ENCODE measurements at regions of chr16 and their contacts with region 1.

Region 1: DNA sequence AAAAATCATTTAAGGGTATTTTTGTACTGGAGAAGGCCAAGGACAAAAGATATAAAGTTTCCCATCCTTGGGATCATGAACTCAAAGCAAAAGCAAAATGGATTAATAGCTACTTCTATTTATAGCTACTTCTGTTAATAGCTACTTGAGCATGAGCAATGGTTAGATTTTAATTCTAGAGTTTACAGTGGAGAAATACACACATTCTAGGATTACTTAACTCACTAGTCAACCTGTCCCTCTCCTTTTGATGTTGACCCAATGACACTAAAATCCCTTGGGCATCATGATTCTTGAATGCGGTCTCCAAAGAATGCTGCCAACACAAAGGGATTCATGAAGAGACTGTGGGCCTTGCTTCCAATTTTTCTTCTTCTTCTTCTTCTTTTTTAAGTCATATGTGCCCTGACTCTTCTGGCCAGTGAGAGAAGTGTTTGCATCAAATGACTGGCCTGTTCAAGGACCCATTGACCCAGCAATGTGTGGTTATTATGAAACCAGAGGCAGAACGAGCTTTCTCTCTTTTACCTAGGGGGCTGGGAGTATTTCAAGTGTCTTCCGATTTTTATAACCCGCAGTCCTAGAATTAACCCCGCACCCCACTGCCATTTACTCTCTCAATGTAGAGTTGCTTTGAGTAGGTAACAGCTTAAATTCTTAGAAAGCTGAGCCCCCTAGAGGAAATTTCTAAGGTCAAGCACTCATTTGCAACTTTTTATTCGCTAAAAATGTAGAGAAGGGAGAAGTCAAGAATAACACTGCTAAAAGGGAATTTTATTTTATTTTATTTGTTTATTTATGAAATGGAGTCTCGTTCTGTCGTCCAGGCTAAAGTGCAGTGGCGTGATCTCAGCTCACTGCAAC is 34.6 kb downstream of the OTOA start:
- DNase-seq: no peak
- H3K4me3 ChIP-seq: no peak overlapping the region
- H3K27ac ChIP-seq: no peak overlapping the region
- H3K4me1 ChIP-seq: no peaks in the 10 kb centered on the region
- H3K27me3 ChIP-seq: no peaks in the 10 kb centered on the region
- CTCF ChIP-seq: no peak

Region 2: DNA sequence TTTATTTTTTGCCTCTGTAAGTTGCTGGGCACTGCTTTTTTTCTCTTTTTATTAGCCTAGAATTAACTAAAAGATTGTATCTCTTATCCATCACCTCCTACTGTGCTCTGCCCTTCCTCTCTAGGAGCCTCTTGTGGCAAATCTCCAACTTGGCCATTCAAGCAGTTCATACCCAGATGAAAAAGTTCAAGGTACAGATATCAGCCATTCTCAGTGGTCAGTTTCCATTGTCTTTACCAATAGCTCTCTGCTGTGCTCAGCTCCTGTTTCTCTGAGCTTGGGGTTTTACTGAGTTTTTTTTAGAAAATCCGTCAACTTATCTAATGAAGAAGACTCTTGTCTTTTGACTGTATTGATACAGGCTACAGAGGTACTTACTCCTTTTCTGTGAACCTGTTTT is 325.1 kb after region 1 on chr16:
- CTCF ChIA-PET with region 1: no interaction called
- POLR2A ChIA-PET with region 1: no interaction called
- intact Hi-C with region 1: no loop called
- DNase-seq: no peak
- H3K4me3 ChIP-seq: no peak overlapping the region
- H3K27ac ChIP-seq: 0 out of 2 replicates have a peak overlapping the region, but pooled peaks have one; percentile 20
- H3K4me1 ChIP-seq: peaks cover 52% of the 10 kb centered on the region
- H3K27me3 ChIP-seq: no peaks in the 10 kb centered on the region
- CTCF ChIP-seq: no peak

Region 3: DNA sequence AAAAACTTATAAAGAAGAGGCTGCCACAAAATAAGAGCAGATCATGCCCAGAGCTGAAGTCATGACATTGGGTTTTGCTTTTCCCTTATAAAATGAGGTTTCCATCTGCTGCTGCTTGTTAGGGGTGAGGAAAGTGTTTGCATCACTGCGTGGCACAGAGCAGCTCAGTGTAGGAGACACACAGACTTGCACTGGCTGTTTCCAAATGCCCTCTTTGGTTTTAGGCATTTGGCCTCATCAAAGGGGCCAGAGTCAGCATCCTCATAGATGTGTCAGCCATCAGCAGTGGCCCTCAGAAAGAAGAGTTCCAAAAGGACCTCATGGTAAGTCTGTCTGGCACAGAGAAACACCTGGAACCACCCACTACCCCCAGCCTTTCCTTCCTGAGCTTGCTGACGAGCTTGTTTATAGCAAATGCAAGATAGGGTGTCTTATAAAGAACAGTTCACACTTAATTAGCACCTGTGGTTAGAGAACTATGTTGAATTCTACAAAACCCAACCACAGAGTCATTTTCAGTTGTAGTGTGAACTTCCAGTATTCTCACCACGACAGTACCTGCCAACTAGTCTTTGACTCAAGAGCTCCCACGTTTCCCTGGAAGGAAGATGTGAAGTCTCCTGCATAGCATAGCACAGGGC is 411.0 kb after region 1 on chr16:
- CTCF ChIA-PET with region 1: no interaction called
- POLR2A ChIA-PET with region 1: interaction called, 11 read pairs
- intact Hi-C with region 1: no loop called
- DNase-seq: no peak
- H3K4me3 ChIP-seq: no peak overlapping the region
- H3K27ac ChIP-seq: no peak overlapping the region
- H3K4me1 ChIP-seq: no peaks in the 10 kb centered on the region
- H3K27me3 ChIP-seq: peaks cover 29% of the 10 kb centered on the region
- CTCF ChIP-seq: no peak